ENCODE measurements at regions of chr9 and their contacts with region 1.

Region 1: DNA sequence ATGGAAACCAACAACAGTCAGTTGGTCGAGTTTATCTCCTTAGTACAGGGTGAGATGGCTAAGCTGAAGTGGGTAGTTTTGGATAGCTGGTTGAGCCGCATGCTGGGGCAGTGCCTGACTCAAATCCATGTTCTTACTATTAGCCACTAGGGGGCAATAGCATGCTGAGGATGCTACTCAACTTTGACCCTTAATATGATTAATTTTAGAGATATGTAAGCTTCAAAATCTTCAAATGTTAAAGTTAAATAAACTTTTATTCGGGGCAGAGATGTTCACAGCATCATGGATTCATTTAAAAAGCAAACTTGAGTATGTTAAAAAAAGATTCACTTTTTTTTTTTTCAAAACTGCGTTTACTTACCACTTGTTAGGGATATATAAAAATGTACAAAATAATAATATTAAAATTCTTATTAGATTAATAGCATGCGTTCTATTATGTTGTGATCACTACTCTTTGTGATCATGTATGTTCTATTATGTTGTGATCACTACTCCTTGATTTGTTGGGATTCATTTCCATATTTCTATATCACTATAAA is 57.0 kb downstream of the C9orf153 start:
- DNase-seq: peak; percentile 56
- H3K4me3 ChIP-seq: peak overlapping the region in 1 of 2 experiments; percentile 22; a peak in 1 of 4 replicates
- H3K27ac ChIP-seq: no peak overlapping the region
- H3K4me1 ChIP-seq: peaks cover 0 to 3% of the 10 kb centered on the region in 2 experiments; a peak in 1 of 4 replicates
- H3K27me3 ChIP-seq: no peaks in the 10 kb centered on the region
- CTCF ChIP-seq: peak; percentile 89
- EP300 ChIP-seq: no peak
- RAD21 ChIP-seq: peak; percentile 79

Region 2: GRCh38 chr9:85359161-85359560 is 843.2 kb before region 1 on chr9:
- CTCF ChIA-PET with region 1: no interaction called
- POLR2A ChIA-PET with region 1: no interaction called
- DNase-seq: no peak
- H3K4me3 ChIP-seq: no peak overlapping the region
- H3K27ac ChIP-seq: no peak overlapping the region
- H3K4me1 ChIP-seq: no peaks in the 10 kb centered on the region
- H3K27me3 ChIP-seq: no peaks in the 10 kb centered on the region
- CTCF ChIP-seq: no peak
- EP300 ChIP-seq: no peak
- RAD21 ChIP-seq: no peak

Region 3: DNA sequence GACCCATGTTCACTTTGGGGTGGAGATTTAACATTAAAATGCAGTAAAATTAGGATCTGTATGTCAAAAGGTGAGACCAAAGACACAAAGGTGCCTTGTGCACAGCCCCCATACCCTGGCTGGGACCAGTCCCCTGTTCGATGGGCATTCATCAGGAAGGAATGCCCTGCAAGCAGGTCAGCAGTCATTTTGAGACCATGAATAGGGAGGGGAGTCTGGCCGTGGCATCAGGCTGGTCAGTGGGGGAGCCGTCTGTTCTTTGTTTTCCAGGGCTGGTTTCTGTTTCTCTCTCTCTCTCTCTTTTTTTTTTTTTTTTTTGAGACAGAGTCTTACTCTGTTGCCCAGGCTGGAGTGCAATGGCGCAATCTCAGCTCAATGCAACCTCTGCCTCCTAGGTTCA is 34.2 kb before region 1 on chr9:
- CTCF ChIA-PET with region 1: interaction called, 13 read pairs
- POLR2A ChIA-PET with region 1: no interaction called
- DNase-seq: no peak
- H3K4me3 ChIP-seq: no peak overlapping the region
- H3K27ac ChIP-seq: no peak overlapping the region
- H3K4me1 ChIP-seq: no peaks in the 10 kb centered on the region
- H3K27me3 ChIP-seq: no peaks in the 10 kb centered on the region
- CTCF ChIP-seq: no peak
- EP300 ChIP-seq: no peak
- RAD21 ChIP-seq: no peak

Region 4: DNA sequence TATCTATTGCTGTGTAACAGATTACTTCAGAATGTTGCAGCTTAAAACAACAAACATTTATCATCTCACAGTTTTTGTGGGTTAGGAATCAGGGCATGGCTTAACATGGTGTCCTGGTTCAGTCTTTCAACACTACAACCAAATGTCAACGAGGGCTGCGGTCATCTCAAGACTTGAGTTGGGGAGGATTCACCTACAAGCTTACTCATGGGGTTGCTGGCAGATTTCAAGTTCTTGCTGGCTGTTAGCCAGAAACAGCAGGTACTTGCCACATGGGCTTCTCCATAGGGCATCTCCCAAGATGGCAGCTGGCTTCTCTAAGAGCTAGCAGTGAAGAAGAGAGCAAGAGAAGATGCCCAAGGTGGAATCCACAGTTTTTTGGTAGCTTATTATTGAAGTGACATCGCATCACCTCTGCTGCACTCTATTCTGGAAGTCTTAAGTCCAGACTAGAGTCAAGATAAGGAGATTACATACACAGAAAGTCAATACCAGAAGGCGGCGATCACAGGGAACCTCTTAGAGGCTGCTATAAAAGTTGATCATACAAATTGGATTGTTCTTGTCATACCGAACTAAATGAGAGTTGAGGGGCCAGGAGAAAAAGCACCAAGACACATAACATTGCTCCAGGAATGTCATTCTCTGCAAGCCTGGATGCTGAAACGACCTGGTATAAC is 14.8 kb after region 1 on chr9:
- CTCF ChIA-PET with region 1: interaction called, 11 read pairs
- POLR2A ChIA-PET with region 1: no interaction called
- DNase-seq: no peak
- H3K4me3 ChIP-seq: no peak overlapping the region
- H3K27ac ChIP-seq: no peak overlapping the region
- H3K4me1 ChIP-seq: no peaks in the 10 kb centered on the region
- H3K27me3 ChIP-seq: no peaks in the 10 kb centered on the region
- CTCF ChIP-seq: no peak
- EP300 ChIP-seq: no peak
- RAD21 ChIP-seq: no peak

Region 5: GRCh38 chr9:86238861-86239770 is 36.7 kb after region 1 on chr9:
- CTCF ChIA-PET with region 1: interaction called, 30 read pairs
- POLR2A ChIA-PET with region 1: no interaction called
- DNase-seq: no peak
- H3K4me3 ChIP-seq: no peak overlapping the region
- H3K27ac ChIP-seq: no peak overlapping the region
- H3K4me1 ChIP-seq: no peaks in the 10 kb centered on the region
- H3K27me3 ChIP-seq: no peaks in the 10 kb centered on the region
- CTCF ChIP-seq: peak; percentile 51
- EP300 ChIP-seq: no peak
- RAD21 ChIP-seq: peak; percentile 25; the same call in 1 of the 2 replicates

Measured in SK-N-SH (cell line).